ENCODE measurements at regions of chr1 and their contacts with region 1.

Region 1: DNA sequence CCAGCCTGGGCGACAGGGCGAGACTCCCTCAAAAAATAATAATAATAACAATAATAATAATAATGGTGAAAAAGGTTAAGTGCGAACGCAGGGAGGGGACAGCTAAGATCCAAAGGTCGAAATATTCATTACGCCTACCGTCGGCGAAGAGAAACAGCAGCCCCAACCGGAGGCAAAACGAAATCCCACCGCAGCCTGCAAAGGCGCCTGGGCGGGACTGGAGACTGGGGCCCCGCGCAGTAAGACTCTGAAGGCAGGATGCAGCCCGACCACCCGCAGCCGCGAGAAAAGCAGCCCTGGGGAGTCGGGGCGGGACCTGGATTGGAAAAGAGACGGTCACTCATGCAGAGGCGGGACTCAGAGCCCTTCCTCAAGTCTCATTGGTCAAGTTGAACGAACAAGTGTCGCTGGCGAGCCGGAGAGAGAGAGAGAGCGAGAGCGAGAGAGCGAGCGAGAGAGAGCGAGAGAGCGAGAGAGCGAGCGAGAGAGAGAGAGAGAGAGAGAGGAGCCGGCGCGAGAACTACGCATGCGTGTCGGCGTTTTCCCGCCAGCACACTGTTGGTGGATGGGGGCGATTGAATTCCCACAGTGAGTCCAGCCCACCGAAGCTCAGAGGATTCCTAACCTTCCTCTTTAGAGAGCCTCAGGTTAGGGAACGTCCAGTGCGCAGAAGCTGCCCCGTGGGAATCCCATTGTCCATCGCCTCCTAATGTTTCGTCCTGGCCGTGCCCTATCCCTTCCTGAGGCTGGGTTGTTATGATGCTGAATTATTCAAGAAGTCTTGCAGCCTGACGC is 10.7 kb downstream of the ENTREP3 start:
- DNase-seq: peak; percentile 93
- ATAC-seq: peak; percentile 97
- H3K4me3 ChIP-seq: peak overlapping the region; percentile 74
- H3K27ac ChIP-seq: peak overlapping the region; percentile 79
- H3K4me1 ChIP-seq: peaks cover 14% of the 10 kb centered on the region
- H3K27me3 ChIP-seq: no peaks in the 10 kb centered on the region
- CTCF ChIP-seq: peak; percentile 12 to 31 (median 17); a peak in 3 of 6 replicates
- EP300 ChIP-seq: peak; percentile 40 to 48; a peak in 2 of 4 replicates
- POLR2A ChIP-seq: peak; percentile 96
- RAD21 ChIP-seq: 0 out of 2 replicates have a peak, but pooled peaks have one; percentile 28

Region 2: GRCh38 chr1:155193275-155193990 is 51.1 kb before region 1 on chr1:
- CTCF ChIA-PET with region 1: interaction called, 26 read pairs
- POLR2A ChIA-PET with region 1: interaction called, 9 read pairs
- RAD21 ChIA-PET with region 1: interaction called, 3 read pairs
- SMC1A ChIA-PET with region 1: no interaction called
- in situ Hi-C with region 1: no loop called
- intact Hi-C with region 1: no loop called
- DNase-seq: no peak
- ATAC-seq: peak; percentile 93
- H3K4me3 ChIP-seq: peak overlapping the region; percentile 77
- H3K27ac ChIP-seq: peak overlapping the region; percentile 22
- H3K4me1 ChIP-seq: peaks cover 16% of the 10 kb centered on the region
- H3K27me3 ChIP-seq: no peaks in the 10 kb centered on the region
- CTCF ChIP-seq: peak; percentile 96 to 99 (median 99)
- EP300 ChIP-seq: no peak
- POLR2A ChIP-seq: peak; percentile 47; the same call in 1 of the 2 replicates
- RAD21 ChIP-seq: peak; percentile 68

Region 3: GRCh38 chr1:155208541-155209311 is 35.8 kb before region 1 on chr1 and contains the start of gene MTX1:
- CTCF ChIA-PET with region 1: interaction called, 28 read pairs
- POLR2A ChIA-PET with region 1: interaction called, 5 read pairs
- RAD21 ChIA-PET with region 1: interaction called, 3 read pairs
- SMC1A ChIA-PET with region 1: interaction called, 15 read pairs
- in situ Hi-C with region 1: no loop called
- intact Hi-C with region 1: loop called (anchors 5 kb)
- DNase-seq: no peak
- ATAC-seq: peak; percentile 93
- H3K4me3 ChIP-seq: peak within 1 kb of the TSS; percentile 98
- H3K27ac ChIP-seq: peak within 1 kb of the TSS; percentile 81
- H3K4me1 ChIP-seq: peaks cover 19% of the 10 kb centered on the region
- H3K27me3 ChIP-seq: no peaks in the 10 kb centered on the region
- CTCF ChIP-seq: no peak
- EP300 ChIP-seq: peak in 1 of 2 experiments; percentile 58; a peak in 1 of 4 replicates
- POLR2A ChIP-seq: peak; percentile 92
- RAD21 ChIP-seq: no peak
- polyA plus RNA-seq, gene MTX1: 15.8 to 25.5 TPM

Region 4: DNA sequence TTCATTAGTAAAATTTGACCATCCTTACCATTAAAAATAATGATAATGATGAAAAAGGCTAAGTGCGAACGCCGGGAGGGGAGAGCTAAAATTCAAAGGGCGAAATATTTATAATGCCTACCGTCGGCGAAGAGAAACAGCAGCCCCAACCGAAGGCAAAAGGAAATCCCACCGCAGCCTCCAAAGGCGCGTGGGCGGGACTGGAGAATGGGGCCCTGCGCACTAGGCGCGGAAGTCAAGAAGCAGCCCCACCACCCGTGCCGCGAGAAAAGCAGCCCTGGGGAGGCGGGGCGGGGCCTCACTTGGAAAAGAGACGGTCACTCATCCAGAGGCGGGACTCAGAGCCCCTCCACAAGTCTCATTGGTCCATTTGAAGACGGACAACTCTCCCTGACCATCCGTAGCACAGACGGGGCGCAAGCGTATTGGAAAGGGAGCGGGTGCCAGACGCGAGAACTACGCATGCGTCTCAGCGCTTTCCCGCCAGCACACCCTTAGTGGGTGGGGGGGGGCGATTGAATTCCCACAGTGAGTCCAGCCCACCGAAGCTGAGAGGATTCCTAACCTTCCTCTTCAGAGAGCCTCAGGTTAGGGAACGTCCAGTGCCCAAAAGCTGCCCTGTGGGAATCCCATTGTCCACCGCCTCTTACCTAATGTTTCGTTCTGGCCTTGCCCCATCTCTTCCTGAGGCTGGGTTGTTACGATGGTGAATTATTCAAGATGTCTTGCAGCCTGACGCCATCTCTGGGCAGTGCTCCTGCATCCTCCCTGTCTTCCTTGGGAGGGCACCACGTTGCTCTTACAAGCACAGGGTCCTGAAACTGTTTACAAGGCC is 17.1 kb before region 1 on chr1:
- CTCF ChIA-PET with region 1: interaction called, 24 read pairs
- POLR2A ChIA-PET with region 1: interaction called, 13 read pairs
- RAD21 ChIA-PET with region 1: interaction called, 4 read pairs
- SMC1A ChIA-PET with region 1: interaction called, 8 read pairs
- in situ Hi-C with region 1: no loop called
- intact Hi-C with region 1: no loop called
- DNase-seq: peak; percentile 96
- ATAC-seq: peak; percentile 95
- H3K4me3 ChIP-seq: peak overlapping the region; percentile 67
- H3K27ac ChIP-seq: peak overlapping the region; percentile 96
- H3K4me1 ChIP-seq: peaks cover 36% of the 10 kb centered on the region
- H3K27me3 ChIP-seq: no peaks in the 10 kb centered on the region
- CTCF ChIP-seq: no peak
- EP300 ChIP-seq: 0 out of 4 replicates have a peak, but pooled peaks of 1 of the 2 experiments have one; percentile 16
- POLR2A ChIP-seq: peak; percentile 79
- RAD21 ChIP-seq: no peak

Region 5: GRCh38 chr1:155277070-155277895 is 32.7 kb after region 1 on chr1 and contains the start of gene HCN3:
- CTCF ChIA-PET with region 1: interaction called, 80 read pairs
- POLR2A ChIA-PET with region 1: interaction called, 12 read pairs
- RAD21 ChIA-PET with region 1: interaction called, 9 read pairs
- SMC1A ChIA-PET with region 1: no interaction called
- in situ Hi-C with region 1: no loop called
- intact Hi-C with region 1: no loop called
- DNase-seq: peak; percentile 79
- ATAC-seq: peak; percentile 78
- H3K4me3 ChIP-seq: peak within 1 kb of the TSS; percentile 82
- H3K27ac ChIP-seq: no peak within 1 kb of the TSS
- H3K4me1 ChIP-seq: peaks cover 13% of the 10 kb centered on the region
- H3K27me3 ChIP-seq: no peaks in the 10 kb centered on the region
- CTCF ChIP-seq: peak; percentile 46 to 72 (median 54); a peak in 5 of 6 replicates
- EP300 ChIP-seq: no peak
- POLR2A ChIP-seq: no peak
- RAD21 ChIP-seq: peak; percentile 24; the same call in 1 of the 2 replicates
- polyA plus RNA-seq, gene HCN3: 0.08 to 0.31 TPM

Measured in GM12878 (cell line).